ENCODE measurements at regions of chr16 and their contacts with region 1.

Region 1: DNA sequence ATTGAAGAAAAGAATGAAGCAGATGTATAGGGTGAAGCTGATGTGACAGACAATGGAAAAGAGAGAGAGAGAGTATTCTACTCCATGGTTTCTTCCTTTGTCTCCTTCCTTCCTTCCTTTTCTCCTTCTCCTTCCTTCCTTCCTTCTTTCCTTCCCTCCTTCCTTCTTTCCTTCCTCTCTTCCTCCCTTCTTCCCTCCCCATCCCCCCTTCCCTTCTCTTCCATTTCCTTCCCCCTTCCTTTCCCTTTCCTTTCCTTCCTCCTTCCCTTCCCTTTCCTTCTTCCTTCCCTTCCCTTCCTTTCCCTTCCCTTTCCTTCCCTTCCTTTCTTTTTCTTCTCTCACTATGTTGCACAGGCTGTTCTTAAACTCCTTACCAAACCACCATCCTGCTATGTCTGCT is 55.7 kb upstream of the GPR139 start:
- DNase-seq: no peak
- ATAC-seq: no peak
- H3K4me3 ChIP-seq: no peak overlapping the region
- H3K27ac ChIP-seq: no peak overlapping the region
- H3K4me1 ChIP-seq: no peaks in the 10 kb centered on the region
- H3K27me3 ChIP-seq: no peaks in the 10 kb centered on the region
- CTCF ChIP-seq: no peak
- EP300 ChIP-seq: no peak
- POLR2A ChIP-seq: no peak
- RAD21 ChIP-seq: no peak

Region 2: GRCh38 chr16:20075243-20075642 is 54.1 kb before region 1 on chr16:
- CTCF ChIA-PET with region 1: no interaction called
- POLR2A ChIA-PET with region 1: no interaction called
- RAD21 ChIA-PET with region 1: no interaction called
- SMC1A ChIA-PET with region 1: no interaction called
- in situ Hi-C with region 1: loop called (anchors 5 kb)
- intact Hi-C with region 1: no loop called
- DNase-seq: no peak
- ATAC-seq: no peak
- H3K4me3 ChIP-seq: no peak overlapping the region
- H3K27ac ChIP-seq: no peak overlapping the region
- H3K4me1 ChIP-seq: no peaks in the 10 kb centered on the region
- H3K27me3 ChIP-seq: 0 out of 4 replicates have a peak, but pooled peaks cover 0 to 1% of the 10 kb centered on the region in 2 experiments
- CTCF ChIP-seq: no peak
- EP300 ChIP-seq: no peak
- POLR2A ChIP-seq: no peak
- RAD21 ChIP-seq: no peak

Region 3: DNA sequence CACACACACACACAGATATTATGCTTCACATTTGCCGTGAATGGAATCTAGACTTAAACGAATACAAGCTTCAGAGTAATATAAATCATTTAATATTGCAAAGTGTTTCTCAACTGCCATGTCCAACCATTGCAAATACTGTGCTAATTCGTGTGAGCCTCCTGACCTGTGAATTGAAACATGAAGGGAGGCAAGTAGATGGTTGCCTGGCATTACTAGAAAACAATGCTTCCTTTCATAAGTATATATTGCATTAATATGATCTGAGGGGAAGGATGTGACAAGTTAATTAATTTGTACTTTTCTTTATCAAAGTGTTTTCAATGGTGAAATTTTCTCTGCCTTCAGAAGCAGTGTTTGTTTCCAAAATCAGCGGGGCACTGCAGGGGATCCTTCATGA is 30.0 kb before region 1 on chr16:
- CTCF ChIA-PET with region 1: no interaction called
- POLR2A ChIA-PET with region 1: no interaction called
- RAD21 ChIA-PET with region 1: no interaction called
- SMC1A ChIA-PET with region 1: no interaction called
- in situ Hi-C with region 1: no loop called
- intact Hi-C with region 1: no loop called
- DNase-seq: no peak
- ATAC-seq: no peak
- H3K4me3 ChIP-seq: no peak overlapping the region
- H3K27ac ChIP-seq: no peak overlapping the region
- H3K4me1 ChIP-seq: no peaks in the 10 kb centered on the region
- H3K27me3 ChIP-seq: no peaks in the 10 kb centered on the region
- CTCF ChIP-seq: no peak
- EP300 ChIP-seq: no peak
- POLR2A ChIP-seq: no peak
- RAD21 ChIP-seq: no peak

Region 4: GRCh38 chr16:20146759-20147490 is 17.6 kb after region 1 on chr16:
- CTCF ChIA-PET with region 1: no interaction called
- POLR2A ChIA-PET with region 1: no interaction called
- RAD21 ChIA-PET with region 1: no interaction called
- SMC1A ChIA-PET with region 1: no interaction called
- in situ Hi-C with region 1: no loop called
- intact Hi-C with region 1: no loop called
- DNase-seq: no peak
- ATAC-seq: no peak
- H3K4me3 ChIP-seq: no peak overlapping the region
- H3K27ac ChIP-seq: no peak overlapping the region
- H3K4me1 ChIP-seq: no peaks in the 10 kb centered on the region
- H3K27me3 ChIP-seq: no peaks in the 10 kb centered on the region
- CTCF ChIP-seq: no peak
- EP300 ChIP-seq: no peak
- POLR2A ChIP-seq: no peak
- RAD21 ChIP-seq: no peak

Region 5: DNA sequence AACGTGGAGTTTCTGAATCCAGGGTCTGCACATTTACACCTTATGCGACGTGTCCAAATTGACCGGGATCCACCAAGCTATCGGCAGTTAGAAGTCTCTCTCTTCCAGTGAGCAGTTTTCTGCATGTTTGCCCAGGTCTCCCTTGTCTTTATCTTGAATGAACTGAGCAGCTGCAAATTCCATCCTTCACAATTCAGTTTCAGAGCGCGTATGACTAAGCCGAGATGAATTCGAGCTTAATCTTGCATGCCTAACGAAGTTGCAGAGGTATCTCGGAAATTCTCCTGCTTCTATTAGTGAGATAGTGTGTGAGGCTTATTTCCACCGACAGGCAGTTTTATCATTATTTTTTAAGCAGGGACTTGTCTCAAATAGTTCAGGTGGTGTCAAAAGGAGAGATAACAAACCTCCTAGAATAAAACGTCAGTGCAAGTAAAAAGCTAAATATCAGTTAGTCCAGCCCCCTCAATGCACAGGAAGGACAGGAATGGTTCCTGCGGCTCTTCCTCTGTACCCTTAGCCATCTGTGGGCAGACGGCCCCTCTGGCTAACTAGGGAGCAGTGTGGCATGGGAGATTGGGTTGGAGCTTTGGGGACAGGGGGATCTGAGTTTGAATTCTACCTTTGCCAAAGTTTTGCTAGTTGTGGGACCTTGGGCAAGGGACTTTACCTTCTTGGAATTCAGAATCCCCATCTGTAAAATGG is 37.3 kb after region 1 on chr16:
- CTCF ChIA-PET with region 1: no interaction called
- POLR2A ChIA-PET with region 1: no interaction called
- RAD21 ChIA-PET with region 1: no interaction called
- SMC1A ChIA-PET with region 1: no interaction called
- in situ Hi-C with region 1: no loop called
- intact Hi-C with region 1: no loop called
- DNase-seq: no peak
- ATAC-seq: no peak
- H3K4me3 ChIP-seq: no peak overlapping the region
- H3K27ac ChIP-seq: no peak overlapping the region
- H3K4me1 ChIP-seq: no peaks in the 10 kb centered on the region
- H3K27me3 ChIP-seq: no peaks in the 10 kb centered on the region; a peak in 1 of 4 replicates
- CTCF ChIP-seq: no peak
- EP300 ChIP-seq: no peak
- POLR2A ChIP-seq: no peak
- RAD21 ChIP-seq: no peak

Measured in GM12878 (cell line).